ENCODE measurements at regions of chr5 and their contacts with region 1.

Region 1: DNA sequence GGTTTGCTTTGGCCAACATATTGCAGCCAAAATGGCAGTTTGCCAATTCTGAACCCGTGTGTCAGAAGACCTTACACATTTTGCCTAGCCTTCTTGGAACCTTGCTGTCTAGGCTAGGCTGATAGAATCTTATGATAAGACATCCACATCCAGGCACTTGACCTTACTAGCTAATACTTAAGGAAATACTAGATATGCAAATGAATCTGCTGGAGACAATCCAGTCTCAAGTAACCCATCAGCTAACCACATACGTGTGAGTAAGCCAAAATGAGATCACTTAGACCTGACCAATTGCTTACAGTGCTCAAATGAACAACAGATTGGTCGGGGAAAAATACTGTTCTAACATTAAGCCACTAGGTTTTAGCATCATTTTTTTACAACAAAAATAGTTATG is 1504.6 kb upstream of the CDH9 start:
- DNase-seq: no peak
- ATAC-seq: peak; percentile 87
- H3K4me3 ChIP-seq: no peak overlapping the region
- H3K27ac ChIP-seq: no peak overlapping the region
- H3K4me1 ChIP-seq: no peaks in the 10 kb centered on the region
- H3K27me3 ChIP-seq: no peaks in the 10 kb centered on the region
- CTCF ChIP-seq: no peak
- EP300 ChIP-seq: no peak
- POLR2A ChIP-seq: no peak
- RAD21 ChIP-seq: no peak

Region 2: GRCh38 chr5:28523888-28524635 is 18.9 kb before region 1 on chr5:
- CTCF ChIA-PET with region 1: interaction called, 6 read pairs
- POLR2A ChIA-PET with region 1: interaction called, 3 read pairs
- RAD21 ChIA-PET with region 1: interaction called, 9 read pairs
- SMC1A ChIA-PET with region 1: interaction called, 10 read pairs
- in situ Hi-C with region 1: no loop called
- intact Hi-C with region 1: no loop called
- DNase-seq: no peak
- ATAC-seq: peak; percentile 44; the same call in 2 of the 3 replicates
- H3K4me3 ChIP-seq: no peak overlapping the region
- H3K27ac ChIP-seq: no peak overlapping the region
- H3K4me1 ChIP-seq: no peaks in the 10 kb centered on the region
- H3K27me3 ChIP-seq: no peaks in the 10 kb centered on the region
- CTCF ChIP-seq: no peak
- EP300 ChIP-seq: no peak
- POLR2A ChIP-seq: no peak
- RAD21 ChIP-seq: no peak